CD4-positive, alpha-beta memory T cell (primary cell): ENCODE measurements at regions of chr1 and their contacts with region 1.

Region 1: DNA sequence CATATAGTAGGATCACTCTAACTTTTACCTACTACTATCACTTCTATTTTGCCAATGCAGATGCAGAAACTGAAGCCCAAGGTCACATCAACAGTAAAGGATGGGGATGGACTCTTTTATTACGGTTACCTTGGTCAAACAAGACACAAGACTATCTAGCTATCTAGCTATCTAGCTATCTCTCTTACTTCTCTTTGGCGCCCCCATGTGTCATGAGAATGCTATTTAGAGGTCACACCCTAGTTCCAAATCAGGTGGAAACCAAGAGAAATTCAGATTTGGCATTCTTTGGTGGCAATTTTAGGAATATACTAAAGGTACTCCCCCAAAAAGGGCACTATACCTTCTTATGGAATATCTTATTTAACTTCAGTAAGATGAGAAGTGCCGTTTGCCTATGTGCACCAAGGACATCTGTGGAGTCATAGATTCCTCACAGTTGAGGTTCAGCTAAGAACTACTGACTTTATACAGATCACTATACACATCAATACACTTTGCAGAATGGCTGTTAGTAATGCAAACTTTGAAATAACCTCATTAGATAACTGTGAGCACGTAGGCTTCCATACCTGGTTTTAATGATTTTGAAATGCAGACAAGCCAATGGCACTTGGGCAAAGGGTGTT is 6.7 kb downstream of the ZNF648 start:
- DNase-seq: peak; percentile 36 to 57 (median 49)
- H3K4me3 ChIP-seq: no peak overlapping the region
- H3K4me3 Mint-ChIP-seq: no peak overlapping the region
- H3K27ac ChIP-seq: no peak overlapping the region
- H3K27ac Mint-ChIP-seq: no peak overlapping the region
- H3K4me1 ChIP-seq: no peaks in the 10 kb centered on the region
- H3K4me1 Mint-ChIP-seq: peaks cover 0 to 2% (median 0%) of the 10 kb centered on the region in 4 donors
- H3K27me3 ChIP-seq: peaks cover 8% of the 10 kb centered on the region
- H3K27me3 Mint-ChIP-seq: peaks cover 10 to 18% of the 10 kb centered on the region in 2 donors

Region 2: GRCh38 chr1:181189691-181190363 is 865.0 kb before region 1 on chr1:
- CTCF ChIA-PET with region 1: interaction called, 3 read pairs
- POLR2A ChIA-PET with region 1: no interaction called
- intact Hi-C with region 1: loop called (anchors 2 kb)
- DNase-seq: peak; percentile 50 to 82 (median 71)
- H3K4me3 ChIP-seq: no peak overlapping the region
- H3K4me3 Mint-ChIP-seq: peak overlapping the region in 5 of 8 donors; percentile 21 to 50 (median 39)
- H3K27ac ChIP-seq: no peak overlapping the region
- H3K27ac Mint-ChIP-seq: peak overlapping the region in 1 of 7 donors; percentile 48
- H3K4me1 ChIP-seq: no peaks in the 10 kb centered on the region
- H3K4me1 Mint-ChIP-seq: peaks cover 0 to 4% (median 3%) of the 10 kb centered on the region in 4 donors
- H3K27me3 ChIP-seq: no peaks in the 10 kb centered on the region
- H3K27me3 Mint-ChIP-seq: peaks cover 1 to 16% of the 10 kb centered on the region in 2 donors

Region 3: DNA sequence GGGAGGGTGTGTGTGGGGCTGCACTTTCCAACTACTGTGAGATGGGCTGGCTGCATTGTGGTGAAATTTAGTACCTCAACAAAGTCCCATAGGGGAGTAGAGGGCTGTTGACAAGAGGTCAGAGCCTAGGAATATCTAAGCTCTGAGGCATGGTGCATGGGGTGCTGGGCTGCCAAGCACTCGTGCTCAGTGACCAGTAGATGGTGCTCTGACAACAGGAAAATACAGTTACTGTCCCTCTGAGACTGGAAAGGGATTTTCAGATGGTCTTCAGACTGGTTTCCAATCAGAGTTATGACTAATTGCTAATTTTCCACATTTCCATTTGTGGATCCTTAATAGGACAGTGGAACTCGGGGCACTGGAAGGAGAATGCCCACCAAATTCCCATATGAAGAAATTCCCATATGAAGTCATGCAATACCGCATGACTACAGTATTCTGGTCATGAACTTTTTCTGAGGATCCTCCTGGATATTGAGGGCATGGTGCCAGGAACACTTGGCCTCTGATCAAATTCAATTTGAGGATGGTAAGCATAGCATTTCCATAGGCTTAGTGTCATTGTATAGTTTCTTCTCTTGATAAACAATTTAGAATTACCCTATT is 575.6 kb before region 1 on chr1:
- CTCF ChIA-PET with region 1: interaction called, 72 read pairs
- POLR2A ChIA-PET with region 1: no interaction called
- intact Hi-C with region 1: no loop called
- DNase-seq: peak in 3 of 5 donors; percentile 18 to 31 (median 19)
- H3K4me3 ChIP-seq: no peak overlapping the region
- H3K4me3 Mint-ChIP-seq: no peak overlapping the region
- H3K27ac ChIP-seq: no peak overlapping the region
- H3K27ac Mint-ChIP-seq: no peak overlapping the region
- H3K4me1 ChIP-seq: peaks cover 10% of the 10 kb centered on the region
- H3K4me1 Mint-ChIP-seq: peaks cover 1 to 13% (median 6%) of the 10 kb centered on the region in 4 donors
- H3K27me3 ChIP-seq: peaks cover 10% of the 10 kb centered on the region
- H3K27me3 Mint-ChIP-seq: peaks cover 24 to 27% of the 10 kb centered on the region in 2 donors

Region 4: DNA sequence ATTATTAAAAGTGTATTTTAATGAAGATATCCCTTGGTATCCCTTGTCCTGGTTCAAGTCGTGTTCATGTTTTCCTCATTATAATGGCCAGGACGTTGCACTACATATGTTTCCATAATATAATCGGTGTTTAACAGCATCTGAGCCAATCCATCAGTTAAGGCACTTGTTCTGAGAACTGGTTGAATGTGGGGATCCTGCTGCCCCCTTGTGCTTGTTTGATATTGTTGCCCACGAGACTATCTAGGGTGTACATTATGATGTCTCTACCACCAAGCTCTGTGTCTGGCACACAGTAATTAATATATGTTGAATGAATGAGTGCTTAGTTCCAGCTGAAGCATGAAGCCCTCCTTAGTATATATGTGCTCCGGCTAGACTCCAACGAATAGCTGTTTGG is 378.5 kb before region 1 on chr1:
- CTCF ChIA-PET with region 1: no interaction called
- POLR2A ChIA-PET with region 1: no interaction called
- intact Hi-C with region 1: loop called (anchors 10 kb)
- DNase-seq: no peak
- H3K4me3 ChIP-seq: no peak overlapping the region
- H3K4me3 Mint-ChIP-seq: no peak overlapping the region
- H3K27ac ChIP-seq: no peak overlapping the region
- H3K27ac Mint-ChIP-seq: no peak overlapping the region
- H3K4me1 ChIP-seq: no peaks in the 10 kb centered on the region
- H3K4me1 Mint-ChIP-seq: no peaks in the 10 kb centered on the region
- H3K27me3 ChIP-seq: no peaks in the 10 kb centered on the region
- H3K27me3 Mint-ChIP-seq: peaks cover 15 to 21% of the 10 kb centered on the region in 2 donors

Region 5: DNA sequence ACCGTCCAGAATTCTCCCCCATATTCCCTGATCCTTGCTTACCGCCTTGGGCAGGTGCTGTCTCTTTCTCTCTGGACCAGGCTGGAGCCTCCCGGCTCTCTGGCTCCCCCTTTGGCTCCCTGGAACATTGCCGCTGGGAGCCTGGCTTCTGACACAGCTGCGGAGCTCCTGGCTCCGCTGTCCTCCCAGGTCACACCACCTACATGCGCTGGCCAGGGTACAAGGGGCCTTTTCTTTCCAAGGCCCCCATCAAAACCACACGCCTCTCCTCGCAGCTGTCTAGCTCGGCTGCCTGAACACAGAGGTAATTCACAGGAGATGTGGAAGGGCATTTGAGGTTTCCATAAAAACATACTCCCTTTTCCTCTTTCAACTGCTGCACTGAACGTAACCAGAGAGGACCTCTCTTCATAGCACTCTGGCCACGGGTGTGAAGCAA is 14.2 kb after region 1 on chr1:
- CTCF ChIA-PET with region 1: interaction called, 22 read pairs
- POLR2A ChIA-PET with region 1: no interaction called
- intact Hi-C with region 1: no loop called
- DNase-seq: peak in 1 of 5 donors; percentile 6
- H3K4me3 ChIP-seq: no peak overlapping the region
- H3K4me3 Mint-ChIP-seq: peak overlapping the region in 1 of 8 donors; percentile 32
- H3K27ac ChIP-seq: no peak overlapping the region
- H3K27ac Mint-ChIP-seq: no peak overlapping the region
- H3K4me1 ChIP-seq: no peaks in the 10 kb centered on the region
- H3K4me1 Mint-ChIP-seq: peaks cover 0 to 6% (median 3%) of the 10 kb centered on the region in 4 donors
- H3K27me3 ChIP-seq: no peaks in the 10 kb centered on the region
- H3K27me3 Mint-ChIP-seq: peaks cover 18 to 19% of the 10 kb centered on the region in 2 donors